Breast epithelium (tissue), 4 donors: ENCODE measurements at regions of chr2 and their contacts with region 1.

Region 1: DNA sequence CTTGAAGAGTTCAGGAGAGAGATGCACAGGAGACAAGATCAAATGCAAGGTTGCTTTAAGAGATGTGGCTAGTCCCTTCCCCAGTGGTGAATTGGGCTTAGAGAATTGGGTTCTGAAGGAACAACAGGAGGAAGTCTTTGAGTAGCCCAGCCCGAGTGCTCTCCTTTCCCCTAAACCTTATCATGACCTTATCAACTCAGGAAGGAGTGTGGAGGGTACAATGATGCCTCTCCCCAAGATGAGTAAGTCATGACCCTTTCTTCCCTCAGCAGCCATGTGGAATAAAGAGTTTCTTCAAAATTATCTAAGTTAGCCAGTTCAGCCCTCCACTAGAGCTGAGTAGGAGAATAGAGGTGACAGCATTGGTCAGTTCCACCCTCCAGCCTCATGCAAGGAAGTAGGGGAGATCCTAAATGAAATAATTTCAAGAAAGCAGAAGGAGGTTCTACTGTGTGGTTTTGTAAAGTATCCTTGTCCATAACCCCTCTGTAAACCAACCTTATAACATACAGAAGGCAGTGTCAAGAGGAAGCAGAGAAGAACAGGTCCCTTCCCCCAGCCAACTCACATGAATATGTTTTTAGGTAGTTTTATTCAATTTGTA is 88.4 kb downstream of the ARHGAP15 start:
- DNase-seq: no peak
- H3K4me3 ChIP-seq: no peak overlapping the region
- H3K27ac ChIP-seq: no peak overlapping the region
- H3K4me1 ChIP-seq: no peaks in the 10 kb centered on the region
- H3K27me3 ChIP-seq: no peaks in the 10 kb centered on the region
- CTCF ChIP-seq: no peak
- POLR2A ChIP-seq: no peak

Region 2: GRCh38 chr2:143162123-143162837 is 55.3 kb before region 1 on chr2:
- intact Hi-C with region 1: loop called (anchors 2 kb)
- DNase-seq: peak in 1 of 2 donors; percentile 21
- H3K4me3 ChIP-seq: no peak overlapping the region
- H3K27ac ChIP-seq: no peak overlapping the region
- H3K4me1 ChIP-seq: no peaks in the 10 kb centered on the region
- H3K27me3 ChIP-seq: no peaks in the 10 kb centered on the region
- CTCF ChIP-seq: peak in 2 of 3 donors; percentile 49 to 64
- POLR2A ChIP-seq: no peak